ENCODE measurements at regions of chr2 and their contacts with region 1.

Region 1: DNA sequence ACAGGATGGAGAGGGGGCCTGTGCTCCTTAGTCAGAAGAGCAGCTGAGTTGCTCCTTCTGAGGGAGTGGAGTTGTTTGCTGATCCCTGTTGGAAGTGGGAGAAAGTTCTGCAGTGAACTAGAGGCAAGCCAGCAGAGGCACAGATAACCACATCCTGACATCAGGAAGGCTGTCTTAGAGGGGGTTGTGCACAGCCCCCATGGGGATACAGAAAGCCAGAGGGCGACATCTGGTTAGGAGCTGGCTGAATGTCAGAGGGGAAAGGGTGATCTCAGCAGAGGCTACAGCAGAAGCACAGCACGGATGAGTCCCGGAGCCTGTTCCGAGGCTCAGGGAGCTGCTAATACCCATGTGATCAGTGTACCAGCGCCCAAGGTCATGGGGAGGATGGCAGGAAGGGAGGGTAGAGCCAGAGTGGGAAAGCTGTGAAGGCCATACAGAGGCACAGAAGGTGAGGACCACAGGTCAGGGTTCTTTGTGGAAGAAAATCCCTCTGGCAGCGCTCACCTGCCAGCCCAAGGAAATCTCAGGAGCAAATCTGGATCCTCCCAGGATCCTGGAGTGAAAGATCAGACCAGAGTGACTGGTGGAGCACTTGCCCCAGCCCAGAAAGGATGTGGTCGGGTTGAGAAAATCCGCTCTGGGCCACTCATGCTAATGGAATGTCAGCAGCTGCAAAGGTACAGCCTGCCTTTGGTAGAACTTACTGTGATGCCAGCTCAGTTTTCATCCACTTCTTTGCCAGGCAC is 111.8 kb downstream of the STPG4 start:
- DNase-seq: peak; percentile 82
- H3K4me3 ChIP-seq: no peak overlapping the region
- H3K27ac ChIP-seq: peak overlapping the region; percentile 97
- H3K4me1 ChIP-seq: peaks cover 28% of the 10 kb centered on the region
- H3K27me3 ChIP-seq: no peaks in the 10 kb centered on the region
- CTCF ChIP-seq: no peak
- POLR2A ChIP-seq: no peak

Region 2: DNA sequence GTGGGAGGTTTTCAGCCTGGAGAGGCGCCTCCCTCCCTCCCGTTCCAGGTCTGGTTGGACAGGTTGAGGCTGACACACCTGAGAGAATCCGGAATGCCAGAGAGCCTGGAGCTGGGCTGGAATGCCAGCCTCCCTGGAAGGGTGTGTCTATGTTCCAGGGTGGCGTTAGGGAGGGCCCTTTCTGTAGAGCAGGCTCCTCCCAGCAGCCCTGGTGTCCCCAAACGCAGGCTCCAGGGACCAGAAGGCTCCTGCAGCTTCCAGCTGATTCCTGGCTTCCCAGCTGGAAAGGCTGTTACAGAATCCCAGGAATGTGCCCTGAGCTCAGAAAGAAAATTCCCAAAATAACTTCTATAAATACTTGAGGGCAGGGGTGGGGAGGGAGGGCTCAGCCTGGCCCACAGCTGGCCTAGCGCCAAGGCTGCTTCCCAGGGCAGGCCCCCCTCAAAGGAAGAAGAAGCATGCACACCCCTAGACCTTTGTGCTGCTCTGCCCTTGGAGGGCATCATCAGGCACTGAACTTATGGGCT is 26.4 kb after region 1 on chr2:
- CTCF ChIA-PET with region 1: interaction called, 13 read pairs
- POLR2A ChIA-PET with region 1: interaction called, 8 read pairs
- dilution Hi-C with region 1: no loop called
- intact Hi-C with region 1: loop called (anchors 1 kb)
- DNase-seq: peak; percentile 34
- H3K4me3 ChIP-seq: no peak overlapping the region
- H3K27ac ChIP-seq: peak overlapping the region; percentile 48
- H3K4me1 ChIP-seq: peaks cover 46% of the 10 kb centered on the region
- H3K27me3 ChIP-seq: no peaks in the 10 kb centered on the region
- CTCF ChIP-seq: no peak
- POLR2A ChIP-seq: no peak

Region 3: GRCh38 chr2:47076586-47077441 is 33.5 kb after region 1 on chr2:
- CTCF ChIA-PET with region 1: interaction called, 4 read pairs
- POLR2A ChIA-PET with region 1: no interaction called
- dilution Hi-C with region 1: no loop called
- intact Hi-C with region 1: loop called (anchors 1 kb)
- DNase-seq: peak; percentile 76
- H3K4me3 ChIP-seq: no peak overlapping the region
- H3K27ac ChIP-seq: peak overlapping the region; percentile 89
- H3K4me1 ChIP-seq: peaks cover 26% of the 10 kb centered on the region
- H3K27me3 ChIP-seq: no peaks in the 10 kb centered on the region
- CTCF ChIP-seq: no peak
- POLR2A ChIP-seq: no peak

Region 4: GRCh38 chr2:47178341-47178740 is 135.0 kb after region 1 on chr2:
- CTCF ChIA-PET with region 1: no interaction called
- POLR2A ChIA-PET with region 1: no interaction called
- dilution Hi-C with region 1: no loop called
- intact Hi-C with region 1: no loop called
- DNase-seq: no peak
- H3K4me3 ChIP-seq: no peak overlapping the region
- H3K27ac ChIP-seq: no peak overlapping the region
- H3K4me1 ChIP-seq: peaks cover 15% of the 10 kb centered on the region
- H3K27me3 ChIP-seq: no peaks in the 10 kb centered on the region
- CTCF ChIP-seq: no peak
- POLR2A ChIP-seq: no peak